Activated CD4-positive, alpha-beta T cell treated with anti-CD3 and anti-CD28 coated beads, Interleukin-2, amount 10 ng/mL, durations not matched to agents 24 days and 14 days (primary cell): ENCODE measurements at regions of chr6 and their contacts with region 1.

Region 1: GRCh38 chr6:96897383-96898240 is at the start of gene NDUFAF4:
- DNase-seq: peak; percentile 99
- H3K4me3 Mint-ChIP-seq: peak within 1 kb of the TSS; percentile 85
- H3K27ac Mint-ChIP-seq: peak within 1 kb of the TSS; percentile 96
- H3K4me1 Mint-ChIP-seq: peaks cover 16% of the 10 kb centered on the region
- H3K27me3 Mint-ChIP-seq: peaks cover 8% of the 10 kb centered on the region
- total RNA-seq, gene NDUFAF4: 71.8 and 74.4 TPM in 2 replicates

Region 2: GRCh38 chr6:96626759-96627364 is 270.8 kb before region 1 on chr6:
- intact Hi-C with region 1: loop called (anchors 2 kb)
- DNase-seq: no peak
- H3K4me3 Mint-ChIP-seq: no peak overlapping the region
- H3K27ac Mint-ChIP-seq: no peak overlapping the region
- H3K4me1 Mint-ChIP-seq: peaks cover 5% of the 10 kb centered on the region
- H3K27me3 Mint-ChIP-seq: peaks cover 20% of the 10 kb centered on the region

Region 3: GRCh38 chr6:96923871-96924493 is 26.4 kb after region 1 on chr6:
- intact Hi-C with region 1: loop called (anchors 1 kb)
- DNase-seq: no peak
- H3K4me3 Mint-ChIP-seq: peak overlapping the region; percentile 91
- H3K27ac Mint-ChIP-seq: peak overlapping the region; percentile 91
- H3K4me1 Mint-ChIP-seq: peaks cover 31% of the 10 kb centered on the region
- H3K27me3 Mint-ChIP-seq: peaks cover 3% of the 10 kb centered on the region

Region 4: GRCh38 chr6:97282726-97283617 is 385.4 kb after region 1 on chr6 and contains the start of gene MMS22L:
- intact Hi-C with region 1: loop called (anchors 1 kb)
- DNase-seq: peak; percentile 98
- H3K4me3 Mint-ChIP-seq: peak within 1 kb of the TSS; percentile 91
- H3K27ac Mint-ChIP-seq: peak within 1 kb of the TSS; percentile 94
- H3K4me1 Mint-ChIP-seq: peaks cover 23% of the 10 kb centered on the region
- H3K27me3 Mint-ChIP-seq: peaks cover 11% of the 10 kb centered on the region
- total RNA-seq, gene MMS22L: 54.8 and 65.2 TPM in 2 replicates